Heart left ventricle (tissue), 16 donors: ENCODE measurements at regions of chr6 and their contacts with region 1.

Region 1: GRCh38 chr6:125974214-125974866 is 12.0 kb upstream of the TRMT11 start:
- DNase-seq: no peak
- ATAC-seq: peak in 2 of 4 donors; percentile 48 to 54
- H3K4me3 ChIP-seq: no peak overlapping the region
- H3K27ac ChIP-seq: no peak overlapping the region
- H3K4me1 ChIP-seq: no peaks in the 10 kb centered on the region
- H3K27me3 ChIP-seq: no peaks in the 10 kb centered on the region
- CTCF ChIP-seq: peak; percentile 37 to 69 (median 59)
- POLR2A ChIP-seq: no peak

Region 2: DNA sequence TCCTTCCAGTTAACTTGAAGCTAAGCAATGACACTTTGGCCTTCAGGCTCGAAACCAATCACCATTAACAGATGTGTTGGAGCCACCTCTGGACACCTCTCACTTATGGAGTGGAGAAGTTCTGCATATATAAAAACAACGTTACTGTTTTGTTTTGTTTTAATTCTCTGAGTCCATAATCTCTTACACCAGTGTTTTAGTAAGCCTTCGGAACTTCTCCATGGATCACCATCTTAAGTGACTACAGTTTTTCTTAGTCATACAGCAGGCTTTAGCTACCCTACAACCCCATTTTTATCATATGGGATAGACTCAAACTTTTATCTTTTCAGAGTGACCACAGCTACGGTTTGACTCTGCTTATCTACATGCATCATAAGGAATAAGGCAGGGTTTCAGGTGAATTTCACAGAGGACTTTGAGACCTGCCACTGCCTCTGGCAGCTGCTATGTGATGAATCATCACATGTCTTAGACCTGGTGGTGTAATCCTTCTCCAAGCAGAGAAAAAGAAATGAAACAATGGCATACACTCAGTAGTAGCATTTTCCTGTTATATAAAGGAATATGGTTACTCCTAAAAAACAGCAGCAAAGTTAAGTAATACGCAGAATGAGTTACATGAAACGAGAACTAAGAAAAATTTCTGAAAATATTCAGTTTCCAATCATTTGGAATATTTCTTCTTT is 667.0 kb before region 1 on chr6:
- intact Hi-C with region 1: loop called in 5 of 10 experiments (anchors 5 kb)
- DNase-seq: no peak
- ATAC-seq: no peak
- H3K4me3 ChIP-seq: no peak overlapping the region
- H3K27ac ChIP-seq: no peak overlapping the region
- H3K4me1 ChIP-seq: peaks cover 0 to 6% (median 0%) of the 10 kb centered on the region in 12 donors
- H3K27me3 ChIP-seq: peaks cover 0 to 3% (median 0%) of the 10 kb centered on the region in 9 donors
- CTCF ChIP-seq: no peak
- POLR2A ChIP-seq: no peak

Region 3: GRCh38 chr6:125790358-125791150 is 183.8 kb before region 1 on chr6 and contains the start of gene NCOA7:
- intact Hi-C with region 1: loop called in 2 of 10 experiments (anchors 5 kb)
- DNase-seq: peak; percentile 87 to 92 (median 89)
- ATAC-seq: peak; percentile 79 to 96 (median 93)
- H3K4me3 ChIP-seq: peak within 1 kb of the TSS; percentile 50 to 98 (median 82)
- H3K27ac ChIP-seq: peak within 1 kb of the TSS; percentile 87 to 98 (median 96)
- H3K4me1 ChIP-seq: peaks cover 0 to 52% (median 22%) of the 10 kb centered on the region in 12 donors
- H3K27me3 ChIP-seq: no peaks in the 10 kb centered on the region
- CTCF ChIP-seq: peak in 4 of 12 donors; percentile 4 to 32 (median 16)
- POLR2A ChIP-seq: peak; percentile 25 to 75
- total RNA-seq, gene NCOA7: 6.4 to 23.1 (median 9.9) TPM

Region 4: DNA sequence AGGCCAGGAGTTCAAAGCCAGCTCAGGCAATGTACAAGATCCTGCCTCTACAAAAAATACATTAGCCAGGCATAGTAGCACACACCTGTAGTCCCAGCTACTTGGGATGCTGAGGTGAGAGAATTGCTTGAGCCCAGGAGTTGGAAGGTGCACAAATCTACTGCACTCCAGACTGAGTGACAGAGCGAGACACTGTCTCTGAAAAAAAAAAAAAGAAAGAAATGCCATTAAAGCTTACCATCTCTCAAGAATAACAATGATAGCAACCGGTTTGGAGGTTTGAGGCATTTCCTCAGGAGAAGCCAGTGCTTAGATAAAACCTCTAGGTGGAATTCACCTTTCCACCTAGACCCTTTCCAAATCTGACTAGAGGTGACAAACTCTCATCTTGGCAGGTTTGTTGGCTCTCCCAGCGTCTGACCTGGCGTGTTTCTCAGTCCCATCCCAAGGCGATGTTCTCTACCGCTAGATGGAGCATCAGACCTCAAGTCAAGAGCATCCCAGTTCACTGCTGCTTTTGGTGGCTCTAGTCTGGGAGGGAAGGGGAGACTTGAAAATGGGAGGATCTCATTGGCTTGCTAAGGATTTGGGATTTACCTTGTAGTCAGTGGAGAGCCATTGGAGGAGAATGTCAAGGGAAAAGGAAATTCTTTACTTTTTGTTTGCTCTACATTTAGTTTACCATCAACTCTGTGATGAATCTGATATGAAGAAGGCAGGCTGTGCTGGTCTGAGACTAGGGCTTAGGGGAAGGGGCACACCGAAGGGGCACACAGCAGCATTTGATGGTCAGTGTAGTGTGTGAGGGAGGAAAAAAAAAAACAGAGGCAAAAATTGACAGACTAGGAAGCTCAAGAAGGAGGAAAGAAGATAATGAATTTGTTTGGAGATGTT is 115.7 kb before region 1 on chr6:
- intact Hi-C with region 1: loop called in 3 of 10 experiments (anchors 5 to 10 kb)
- DNase-seq: peak in 4 of 5 donors; percentile 29 to 53 (median 38)
- ATAC-seq: peak; percentile 69 to 90 (median 86)
- H3K4me3 ChIP-seq: no peak overlapping the region
- H3K27ac ChIP-seq: no peak overlapping the region
- H3K4me1 ChIP-seq: peaks cover 0 to 10% (median 1%) of the 10 kb centered on the region in 12 donors
- H3K27me3 ChIP-seq: no peaks in the 10 kb centered on the region
- CTCF ChIP-seq: peak; percentile 44 to 81 (median 60)
- POLR2A ChIP-seq: no peak

Region 5: DNA sequence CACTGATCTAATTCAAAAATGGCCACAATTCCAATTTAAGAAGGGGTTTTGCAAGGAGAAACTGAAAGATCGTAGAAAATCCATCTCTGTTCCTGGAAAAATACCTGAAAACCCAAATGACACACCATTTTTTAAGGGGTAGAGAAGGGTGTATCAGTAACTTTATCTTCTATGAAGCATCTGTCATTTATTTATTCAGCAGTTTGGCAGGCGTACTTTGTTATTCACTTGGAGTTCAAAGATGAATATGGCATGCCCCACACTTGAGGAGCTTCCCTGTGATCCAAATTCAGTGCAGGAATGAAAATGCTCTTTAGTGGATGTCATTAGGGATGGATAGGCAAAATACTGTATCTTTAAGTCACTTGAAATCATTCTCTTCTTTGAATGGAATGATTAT is 10.5 kb before region 1 on chr6:
- intact Hi-C with region 1: loop called in 1 of 10 experiments (anchors 2 kb)
- DNase-seq: no peak
- ATAC-seq: no peak
- H3K4me3 ChIP-seq: no peak overlapping the region
- H3K27ac ChIP-seq: no peak overlapping the region
- H3K4me1 ChIP-seq: peaks cover 0 to 10% (median 5%) of the 10 kb centered on the region in 12 donors
- H3K27me3 ChIP-seq: no peaks in the 10 kb centered on the region
- CTCF ChIP-seq: no peak
- POLR2A ChIP-seq: no peak

Region 6: GRCh38 chr6:126804332-126805064 is 830.2 kb after region 1 on chr6:
- intact Hi-C with region 1: no loop called
- DNase-seq: peak in 1 of 5 donors; percentile 19
- ATAC-seq: peak in 3 of 4 donors; percentile 45 to 56 (median 52)
- H3K4me3 ChIP-seq: no peak overlapping the region
- H3K27ac ChIP-seq: no peak overlapping the region
- H3K4me1 ChIP-seq: no peaks in the 10 kb centered on the region
- H3K27me3 ChIP-seq: peaks cover 0 to 11% (median 0%) of the 10 kb centered on the region in 9 donors
- CTCF ChIP-seq: peak; percentile 59 to 80 (median 68)
- POLR2A ChIP-seq: no peak